GM12878 (cell line): ENCODE measurements at regions of chr17 and their contacts with region 1.

Region 1: DNA sequence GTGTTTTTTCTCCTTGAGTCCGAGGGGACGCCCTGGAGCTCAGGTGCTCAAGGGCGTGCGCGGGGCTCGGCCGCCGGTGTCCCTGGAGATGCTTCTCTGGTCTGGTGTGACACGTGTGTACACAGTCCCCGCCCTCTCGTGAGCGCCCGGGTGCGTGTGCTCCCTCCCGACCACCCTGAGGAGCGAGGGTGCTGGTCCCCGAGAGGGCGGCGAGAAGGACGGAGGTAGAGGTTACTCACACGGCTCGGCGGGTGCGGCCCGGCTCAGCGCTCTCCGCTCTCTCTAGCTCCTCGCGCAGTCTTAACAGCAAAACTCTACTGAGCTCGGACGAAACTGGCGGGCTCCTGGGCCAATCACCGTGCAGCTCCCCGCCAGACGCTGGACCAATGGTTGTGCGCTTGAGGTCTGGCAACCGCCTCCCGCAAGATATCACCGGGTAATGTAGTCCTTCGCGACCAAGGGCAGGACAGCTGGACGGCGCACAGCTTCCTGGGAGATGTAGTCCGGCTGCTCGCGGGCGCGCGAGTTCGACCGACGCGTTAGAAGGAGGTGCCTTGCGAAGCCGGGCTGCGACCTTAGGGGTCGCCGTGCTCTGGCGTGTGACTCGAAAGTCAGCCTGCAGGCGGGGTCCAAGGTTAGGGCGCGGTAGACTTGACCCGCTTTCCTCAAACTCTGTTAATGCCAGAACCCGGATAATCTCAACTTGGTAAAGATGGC is at the start of gene SLC25A19:
- DNase-seq: peak; percentile 98
- ATAC-seq: peak; percentile 95
- H3K4me3 ChIP-seq: peak within 1 kb of the TSS; percentile 91
- H3K27ac ChIP-seq: peak within 1 kb of the TSS; percentile 83
- H3K4me1 ChIP-seq: peaks cover 34% of the 10 kb centered on the region
- H3K27me3 ChIP-seq: no peaks in the 10 kb centered on the region
- CTCF ChIP-seq: peak; percentile 30 to 60 (median 37); a peak in 4 of 6 replicates
- EP300 ChIP-seq: no peak
- POLR2A ChIP-seq: peak; percentile 97
- RAD21 ChIP-seq: peak; percentile 51
- polyA plus RNA-seq, gene SLC25A19: 32.9 to 43.1 TPM

Region 2: GRCh38 chr17:75182569-75183450 is 106.5 kb before region 1 on chr17 and contains the start of gene SUMO2:
- CTCF ChIA-PET with region 1: no interaction called
- POLR2A ChIA-PET with region 1: no interaction called
- RAD21 ChIA-PET with region 1: no interaction called
- SMC1A ChIA-PET with region 1: no interaction called
- in situ Hi-C with region 1: no loop called
- intact Hi-C with region 1: no loop called
- DNase-seq: peak; percentile 85
- ATAC-seq: peak; percentile 86
- H3K4me3 ChIP-seq: peak within 1 kb of the TSS; percentile 92
- H3K27ac ChIP-seq: peak within 1 kb of the TSS; percentile 95
- H3K4me1 ChIP-seq: no peaks in the 10 kb centered on the region
- H3K27me3 ChIP-seq: no peaks in the 10 kb centered on the region
- CTCF ChIP-seq: peak; percentile 9 to 43 (median 15); a peak in 3 of 6 replicates
- EP300 ChIP-seq: no peak
- POLR2A ChIP-seq: peak; percentile 94
- RAD21 ChIP-seq: no peak
- polyA plus RNA-seq, gene SUMO2: 709 to 767 TPM

Region 3: GRCh38 chr17:75261336-75262111 is 27.7 kb before region 1 on chr17 and contains the starts of genes GGA3 and MRPS7:
- CTCF ChIA-PET with region 1: interaction called, 20 read pairs
- POLR2A ChIA-PET with region 1: interaction called, 18 read pairs
- RAD21 ChIA-PET with region 1: interaction called, 19 read pairs
- SMC1A ChIA-PET with region 1: interaction called, 24 read pairs
- in situ Hi-C with region 1: no loop called
- intact Hi-C with region 1: no loop called
- DNase-seq: peak; percentile 75
- ATAC-seq: peak; percentile 96
- H3K4me3 ChIP-seq: peak within 1 kb of the TSS; percentile 86
- H3K27ac ChIP-seq: peak within 1 kb of the TSS; percentile 99
- H3K4me1 ChIP-seq: peaks cover 9% of the 10 kb centered on the region
- H3K27me3 ChIP-seq: no peaks in the 10 kb centered on the region
- CTCF ChIP-seq: no peak; a peak in 1 of 6 replicates
- EP300 ChIP-seq: 0 out of 4 replicates have a peak, but pooled peaks of 1 of the 2 experiments have one; percentile 12
- POLR2A ChIP-seq: peak; percentile 91
- RAD21 ChIP-seq: no peak
- polyA plus RNA-seq, gene GGA3: 7.0 to 8.1 TPM
- polyA plus RNA-seq, gene MRPS7: 161 to 209 TPM

Region 4: DNA sequence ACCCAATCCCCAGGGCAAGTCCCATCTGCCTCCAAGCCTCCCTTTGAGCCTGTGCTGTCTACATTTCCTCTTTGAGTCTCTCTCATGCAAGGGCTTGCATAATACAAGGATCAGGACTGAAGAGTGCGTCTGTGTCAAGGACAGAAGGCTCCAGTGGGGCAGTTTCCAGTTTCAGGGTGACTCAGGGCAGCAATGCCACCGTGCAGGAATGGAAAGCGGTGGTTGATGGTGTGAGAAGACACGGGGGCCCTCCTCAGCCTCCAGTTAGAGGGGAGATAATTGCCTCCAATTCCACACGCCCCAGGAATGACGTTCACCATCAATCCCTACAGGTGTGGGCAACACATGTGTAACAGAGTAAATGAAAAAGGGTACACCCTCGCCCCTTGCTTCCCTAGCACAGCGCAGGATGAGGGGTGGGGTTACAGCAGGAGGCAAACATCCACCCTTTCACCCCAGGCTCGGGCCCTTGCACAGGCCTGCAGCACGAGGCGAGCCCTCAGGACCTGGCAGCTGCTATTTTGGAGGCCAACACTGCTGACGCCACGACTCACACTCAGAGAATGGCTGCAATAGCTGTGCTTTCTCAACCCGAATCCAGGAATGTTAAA is 24.8 kb after region 1 on chr17:
- CTCF ChIA-PET with region 1: interaction called, 21 read pairs
- POLR2A ChIA-PET with region 1: interaction called, 13 read pairs
- RAD21 ChIA-PET with region 1: interaction called, 364 read pairs
- SMC1A ChIA-PET with region 1: interaction called, 243 read pairs
- in situ Hi-C with region 1: no loop called
- intact Hi-C with region 1: no loop called
- DNase-seq: no peak
- ATAC-seq: peak; percentile 79
- H3K4me3 ChIP-seq: no peak overlapping the region
- H3K27ac ChIP-seq: peak overlapping the region; percentile 87
- H3K4me1 ChIP-seq: peaks cover 67% of the 10 kb centered on the region
- H3K27me3 ChIP-seq: no peaks in the 10 kb centered on the region
- CTCF ChIP-seq: no peak
- EP300 ChIP-seq: 0 out of 4 replicates have a peak, but pooled peaks of 1 of the 2 experiments have one; percentile 36
- POLR2A ChIP-seq: no peak
- RAD21 ChIP-seq: no peak

Region 5: GRCh38 chr17:75345514-75346167 is 56.4 kb after region 1 on chr17:
- CTCF ChIA-PET with region 1: interaction called, 10 read pairs
- POLR2A ChIA-PET with region 1: interaction called, 12 read pairs
- RAD21 ChIA-PET with region 1: interaction called, 35 read pairs
- SMC1A ChIA-PET with region 1: interaction called, 8 read pairs
- in situ Hi-C with region 1: no loop called
- intact Hi-C with region 1: no loop called
- DNase-seq: peak; percentile 91
- ATAC-seq: peak; percentile 79
- H3K4me3 ChIP-seq: peak overlapping the region; percentile 62
- H3K27ac ChIP-seq: peak overlapping the region; percentile 85
- H3K4me1 ChIP-seq: peaks cover 68% of the 10 kb centered on the region
- H3K27me3 ChIP-seq: no peaks in the 10 kb centered on the region
- CTCF ChIP-seq: no peak
- EP300 ChIP-seq: peak; percentile 34 to 65; a peak in 1 of 4 replicates
- POLR2A ChIP-seq: no peak
- RAD21 ChIP-seq: 0 out of 2 replicates have a peak, but pooled peaks have one; percentile 25

Region 6: GRCh38 chr17:75380315-75380714 is 91.0 kb after region 1 on chr17:
- CTCF ChIA-PET with region 1: interaction called, 9 read pairs
- POLR2A ChIA-PET with region 1: interaction called, 6 read pairs
- RAD21 ChIA-PET with region 1: interaction called, 17 read pairs
- SMC1A ChIA-PET with region 1: interaction called, 22 read pairs
- in situ Hi-C with region 1: no loop called
- intact Hi-C with region 1: no loop called
- DNase-seq: no peak
- ATAC-seq: no peak
- H3K4me3 ChIP-seq: no peak overlapping the region
- H3K27ac ChIP-seq: no peak overlapping the region
- H3K4me1 ChIP-seq: peaks cover 6% of the 10 kb centered on the region; the same call in 1 of the 2 replicates
- H3K27me3 ChIP-seq: no peaks in the 10 kb centered on the region
- CTCF ChIP-seq: no peak
- EP300 ChIP-seq: no peak
- POLR2A ChIP-seq: no peak
- RAD21 ChIP-seq: no peak

Region 7: DNA sequence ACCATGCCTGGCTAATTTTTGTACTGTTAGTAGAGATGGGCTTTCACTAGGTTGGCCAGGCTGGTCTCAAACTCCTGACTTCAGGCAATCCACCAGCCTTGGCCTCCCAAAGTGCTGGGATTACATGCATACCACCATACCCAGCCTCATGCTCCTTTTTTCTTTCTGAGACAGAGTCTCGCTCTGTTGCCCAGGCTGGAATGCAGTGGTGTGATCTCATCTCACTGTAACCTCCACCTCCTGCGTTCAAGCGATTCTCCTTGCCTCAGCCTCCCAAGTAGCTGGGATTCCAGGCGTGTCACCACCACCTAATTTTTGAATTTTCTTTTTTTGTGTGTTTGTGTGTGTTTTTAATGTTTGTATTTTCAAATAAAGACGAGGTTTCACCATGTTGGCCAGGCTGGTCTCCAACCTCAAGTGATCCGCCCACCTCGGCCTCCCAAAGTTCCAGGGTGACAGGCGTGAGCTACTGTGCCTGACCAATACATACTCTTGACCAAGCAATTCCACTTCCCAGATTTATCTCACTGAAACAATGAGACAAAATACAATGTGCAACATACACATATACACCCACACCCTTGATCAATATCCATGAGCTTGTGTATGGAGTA is 111.2 kb after region 1 on chr17:
- CTCF ChIA-PET with region 1: interaction called, 23 read pairs
- POLR2A ChIA-PET with region 1: interaction called, 10 read pairs
- RAD21 ChIA-PET with region 1: interaction called, 37 read pairs
- SMC1A ChIA-PET with region 1: interaction called, 12 read pairs
- in situ Hi-C with region 1: no loop called
- intact Hi-C with region 1: loop called (anchors 2 kb)
- DNase-seq: no peak
- ATAC-seq: no peak
- H3K4me3 ChIP-seq: peak overlapping the region; percentile 52
- H3K27ac ChIP-seq: no peak overlapping the region
- H3K4me1 ChIP-seq: peaks cover 24% of the 10 kb centered on the region; the same call in 1 of the 2 replicates
- H3K27me3 ChIP-seq: no peaks in the 10 kb centered on the region
- CTCF ChIP-seq: no peak
- EP300 ChIP-seq: no peak
- POLR2A ChIP-seq: no peak
- RAD21 ChIP-seq: no peak

Region 8: GRCh38 chr17:75412455-75413317 is 123.4 kb after region 1 on chr17:
- CTCF ChIA-PET with region 1: interaction called, 65 read pairs
- POLR2A ChIA-PET with region 1: interaction called, 9 read pairs
- RAD21 ChIA-PET with region 1: interaction called, 41 read pairs
- SMC1A ChIA-PET with region 1: interaction called, 32 read pairs
- in situ Hi-C with region 1: no loop called
- intact Hi-C with region 1: no loop called
- DNase-seq: no peak
- ATAC-seq: peak; percentile 93
- H3K4me3 ChIP-seq: no peak overlapping the region
- H3K27ac ChIP-seq: peak overlapping the region; percentile 20
- H3K4me1 ChIP-seq: peaks cover 15% of the 10 kb centered on the region
- H3K27me3 ChIP-seq: no peaks in the 10 kb centered on the region
- CTCF ChIP-seq: peak; percentile 73 to 89 (median 85)
- EP300 ChIP-seq: no peak
- POLR2A ChIP-seq: no peak
- RAD21 ChIP-seq: peak; percentile 94

Region 9: DNA sequence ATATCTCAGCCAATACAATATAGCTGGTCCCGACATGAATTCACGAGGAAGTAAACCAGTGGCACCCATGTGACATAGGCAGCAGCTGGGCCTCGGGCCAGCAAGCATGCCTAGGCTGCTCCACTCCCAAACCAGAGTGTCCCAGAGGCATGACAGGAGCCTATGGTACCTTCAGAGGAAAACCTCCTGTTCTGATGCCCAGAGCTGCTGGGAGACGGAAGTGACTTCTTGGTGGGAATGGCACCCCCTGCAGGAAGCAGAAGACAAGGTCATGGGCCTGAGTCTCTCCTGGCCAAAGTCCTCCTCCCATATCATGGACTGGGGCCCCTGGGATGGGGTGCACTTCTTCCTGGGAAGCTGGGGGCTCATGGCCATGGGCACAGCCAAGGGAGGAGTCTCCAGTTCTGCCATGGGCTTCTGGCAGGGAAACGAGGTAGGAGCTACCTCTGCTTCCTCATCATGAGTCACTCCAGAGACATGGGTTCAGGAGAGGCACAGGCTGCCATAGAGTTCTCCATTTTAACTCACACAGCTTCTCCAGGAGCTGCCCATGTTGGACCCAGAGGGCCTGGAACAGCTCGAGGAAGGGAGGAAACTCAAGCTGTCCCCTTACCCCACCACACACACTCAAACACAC is 638.1 kb after region 1 on chr17:
- CTCF ChIA-PET with region 1: no interaction called
- POLR2A ChIA-PET with region 1: no interaction called
- RAD21 ChIA-PET with region 1: no interaction called
- SMC1A ChIA-PET with region 1: no interaction called
- in situ Hi-C with region 1: no loop called
- intact Hi-C with region 1: no loop called
- DNase-seq: no peak
- ATAC-seq: peak; percentile 59
- H3K4me3 ChIP-seq: no peak overlapping the region
- H3K27ac ChIP-seq: no peak overlapping the region
- H3K4me1 ChIP-seq: no peaks in the 10 kb centered on the region
- H3K27me3 ChIP-seq: no peaks in the 10 kb centered on the region
- CTCF ChIP-seq: peak; percentile 9 to 40 (median 35); a peak in 3 of 6 replicates
- EP300 ChIP-seq: no peak
- POLR2A ChIP-seq: no peak
- RAD21 ChIP-seq: no peak